Heart left ventricle (tissue), 16 donors: ENCODE measurements at regions of chr20 and their contacts with region 1.

Region 1: GRCh38 chr20:36214684-36215256 is 21.5 kb upstream of the AAR2 start:
- DNase-seq: no peak
- ATAC-seq: peak in 3 of 4 donors; percentile 44 to 63 (median 45)
- H3K4me3 ChIP-seq: no peak overlapping the region
- H3K27ac ChIP-seq: no peak overlapping the region
- H3K4me1 ChIP-seq: no peaks in the 10 kb centered on the region
- H3K27me3 ChIP-seq: no peaks in the 10 kb centered on the region
- CTCF ChIP-seq: peak; percentile 21 to 59 (median 47)
- POLR2A ChIP-seq: no peak

Region 2: GRCh38 chr20:36399147-36399968 is 184.6 kb after region 1 on chr20:
- intact Hi-C with region 1: no loop called
- DNase-seq: no peak
- ATAC-seq: no peak
- H3K4me3 ChIP-seq: no peak overlapping the region
- H3K27ac ChIP-seq: no peak overlapping the region
- H3K4me1 ChIP-seq: peaks cover 0 to 4% (median 0%) of the 10 kb centered on the region in 12 donors
- H3K27me3 ChIP-seq: peaks cover 0 to 39% (median 17%) of the 10 kb centered on the region in 9 donors
- CTCF ChIP-seq: peak in 6 of 12 donors; percentile 7 to 32 (median 26)
- POLR2A ChIP-seq: no peak

Region 3: GRCh38 chr20:36439040-36439730 is 224.4 kb after region 1 on chr20:
- intact Hi-C with region 1: loop called in 8 of 10 experiments (anchors 2 to 5 kb)
- DNase-seq: peak; percentile 37 to 80 (median 53)
- ATAC-seq: peak in 3 of 4 donors; percentile 59 to 72 (median 63)
- H3K4me3 ChIP-seq: no peak overlapping the region
- H3K27ac ChIP-seq: no peak overlapping the region
- H3K4me1 ChIP-seq: peaks cover 0 to 8% (median 0%) of the 10 kb centered on the region in 12 donors
- H3K27me3 ChIP-seq: peaks cover 0 to 16% (median 3%) of the 10 kb centered on the region in 9 donors
- CTCF ChIP-seq: peak; percentile 75 to 90 (median 82)
- POLR2A ChIP-seq: no peak

Region 4: GRCh38 chr20:36585463-36586108 is 370.8 kb after region 1 on chr20:
- intact Hi-C with region 1: loop called in 4 of 10 experiments (anchors 2 to 10 kb)
- DNase-seq: no peak
- ATAC-seq: no peak
- H3K4me3 ChIP-seq: no peak overlapping the region
- H3K27ac ChIP-seq: no peak overlapping the region
- H3K4me1 ChIP-seq: no peaks in the 10 kb centered on the region
- H3K27me3 ChIP-seq: no peaks in the 10 kb centered on the region
- CTCF ChIP-seq: no peak
- POLR2A ChIP-seq: no peak

Region 5: DNA sequence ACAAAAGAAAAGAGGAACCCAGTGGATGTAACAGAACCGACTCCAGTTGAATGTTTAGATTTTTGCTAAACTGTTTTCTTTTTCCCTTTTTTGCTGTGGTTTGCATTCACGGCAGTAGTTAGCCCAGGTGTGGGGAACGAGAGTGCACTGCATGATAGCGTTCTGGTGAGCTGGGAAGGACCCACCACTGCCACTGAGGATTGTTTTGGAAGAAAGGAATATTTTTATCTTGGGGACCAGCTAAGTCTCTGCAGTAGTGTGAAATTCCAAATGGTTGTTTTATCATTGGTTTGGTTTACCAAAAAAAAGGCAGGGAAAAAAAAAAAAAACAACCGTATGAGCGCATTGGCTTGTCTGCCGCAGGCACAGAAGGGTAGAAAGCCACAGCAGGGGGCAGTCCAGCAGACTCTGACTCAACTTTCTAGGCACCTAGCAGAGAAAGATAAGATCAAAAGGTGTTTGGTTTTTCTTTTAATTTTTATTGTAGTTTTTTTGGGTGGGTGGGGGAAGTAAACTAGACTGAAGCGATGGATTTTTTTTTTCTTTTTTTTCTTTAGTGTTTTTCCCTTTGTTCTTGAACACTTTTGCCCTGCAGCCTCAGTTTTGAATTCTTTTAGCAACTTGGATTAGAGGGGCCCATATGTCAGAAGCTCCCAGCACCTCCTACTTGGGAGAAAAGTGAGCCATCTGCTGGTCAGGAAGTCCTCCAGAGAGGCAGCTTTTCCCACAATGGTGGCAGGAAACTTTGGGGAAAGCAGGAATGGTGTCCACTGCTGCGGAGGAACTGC is 377.3 kb after region 1 on chr20:
- intact Hi-C with region 1: loop called in 4 of 10 experiments (anchors 2 to 10 kb)
- DNase-seq: peak in 1 of 5 donors; percentile 35
- ATAC-seq: peak in 3 of 4 donors; percentile 51 to 61 (median 52)
- H3K4me3 ChIP-seq: no peak overlapping the region
- H3K27ac ChIP-seq: no peak overlapping the region
- H3K4me1 ChIP-seq: peaks cover 0 to 44% (median 0%) of the 10 kb centered on the region in 12 donors
- H3K27me3 ChIP-seq: no peaks in the 10 kb centered on the region
- CTCF ChIP-seq: peak; percentile 20 to 62 (median 46)
- POLR2A ChIP-seq: no peak